ENCODE measurements at regions of chr12 and their contacts with region 1.

Region 1: GRCh38 chr12:56636675-56637540 is 6.8 kb upstream of the BAZ2A start:
- DNase-seq: peak; percentile 95
- ATAC-seq: peak; percentile 64
- H3K4me3 Mint-ChIP-seq: peak overlapping the region; percentile 96
- H3K27ac Mint-ChIP-seq: peak overlapping the region; percentile 97
- H3K4me1 Mint-ChIP-seq: peaks cover 64% of the 10 kb centered on the region
- H3K27me3 Mint-ChIP-seq: no peaks in the 10 kb centered on the region
- CTCF ChIP-seq: no peak

Region 2: GRCh38 chr12:55973598-55974307 is 663.2 kb before region 1 on chr12 and contains the start of gene RAB5B:
- CTCF ChIA-PET with region 1: no interaction called
- POLR2A ChIA-PET with region 1: no interaction called
- intact Hi-C with region 1: loop called (anchors 5 kb)
- DNase-seq: peak; percentile 83
- ATAC-seq: peak; percentile 87
- H3K4me3 Mint-ChIP-seq: no peak within 1 kb of the TSS
- H3K27ac Mint-ChIP-seq: no peak within 1 kb of the TSS
- H3K4me1 Mint-ChIP-seq: peaks cover 27% of the 10 kb centered on the region
- H3K27me3 Mint-ChIP-seq: no peaks in the 10 kb centered on the region
- CTCF ChIP-seq: no peak
- total RNA-seq, gene RAB5B: 82.1 and 83.8 TPM in 2 replicates

Region 3: DNA sequence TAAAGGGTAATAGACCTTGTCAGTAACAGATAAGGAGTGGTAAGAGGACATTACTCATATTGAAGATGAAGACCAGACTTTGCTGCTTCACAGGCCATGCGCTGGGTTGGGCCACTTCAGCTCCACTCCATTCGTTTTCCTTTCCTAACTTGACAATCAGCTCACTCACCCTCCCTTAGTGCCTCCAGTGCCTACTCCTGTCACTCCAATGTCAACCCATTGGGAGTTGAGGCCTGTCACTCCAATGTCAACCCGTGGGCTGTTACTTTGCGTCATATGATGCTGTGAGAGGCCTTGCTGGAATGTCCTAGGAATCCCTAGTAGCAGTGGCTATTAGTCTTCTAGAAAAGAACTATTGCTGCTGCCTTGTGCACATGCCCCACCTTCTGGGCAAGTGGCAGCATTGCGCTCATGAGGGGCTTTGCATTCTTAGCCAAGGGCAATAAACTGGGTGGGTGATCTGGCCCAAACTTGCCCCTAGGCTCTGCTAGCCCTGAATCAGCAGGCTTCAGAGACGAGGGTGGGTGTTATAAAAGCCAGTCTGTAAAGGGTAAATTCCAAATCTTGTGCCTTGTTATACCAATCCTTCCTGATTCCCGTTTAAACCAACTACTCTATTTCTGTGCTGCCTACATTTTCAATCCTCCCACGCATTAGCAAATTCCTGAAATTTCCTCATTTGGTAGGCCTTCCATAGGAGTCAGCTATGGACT is 42.8 kb before region 1 on chr12:
- CTCF ChIA-PET with region 1: interaction called, 25 read pairs
- POLR2A ChIA-PET with region 1: no interaction called
- intact Hi-C with region 1: no loop called
- DNase-seq: peak; percentile 33
- ATAC-seq: peak; percentile 83
- H3K4me3 Mint-ChIP-seq: no peak overlapping the region
- H3K27ac Mint-ChIP-seq: no peak overlapping the region
- H3K4me1 Mint-ChIP-seq: peaks cover 2% of the 10 kb centered on the region
- H3K27me3 Mint-ChIP-seq: no peaks in the 10 kb centered on the region
- CTCF ChIP-seq: no peak

Region 4: GRCh38 chr12:56677680-56678079 is 40.8 kb after region 1 on chr12:
- CTCF ChIA-PET with region 1: interaction called, 5 read pairs
- POLR2A ChIA-PET with region 1: interaction called, 17 read pairs
- intact Hi-C with region 1: no loop called
- DNase-seq: no peak
- ATAC-seq: no peak
- H3K4me3 Mint-ChIP-seq: no peak overlapping the region
- H3K27ac Mint-ChIP-seq: peak overlapping the region; percentile 42
- H3K4me1 Mint-ChIP-seq: peaks cover 53% of the 10 kb centered on the region
- H3K27me3 Mint-ChIP-seq: no peaks in the 10 kb centered on the region
- CTCF ChIP-seq: no peak

Region 5: DNA sequence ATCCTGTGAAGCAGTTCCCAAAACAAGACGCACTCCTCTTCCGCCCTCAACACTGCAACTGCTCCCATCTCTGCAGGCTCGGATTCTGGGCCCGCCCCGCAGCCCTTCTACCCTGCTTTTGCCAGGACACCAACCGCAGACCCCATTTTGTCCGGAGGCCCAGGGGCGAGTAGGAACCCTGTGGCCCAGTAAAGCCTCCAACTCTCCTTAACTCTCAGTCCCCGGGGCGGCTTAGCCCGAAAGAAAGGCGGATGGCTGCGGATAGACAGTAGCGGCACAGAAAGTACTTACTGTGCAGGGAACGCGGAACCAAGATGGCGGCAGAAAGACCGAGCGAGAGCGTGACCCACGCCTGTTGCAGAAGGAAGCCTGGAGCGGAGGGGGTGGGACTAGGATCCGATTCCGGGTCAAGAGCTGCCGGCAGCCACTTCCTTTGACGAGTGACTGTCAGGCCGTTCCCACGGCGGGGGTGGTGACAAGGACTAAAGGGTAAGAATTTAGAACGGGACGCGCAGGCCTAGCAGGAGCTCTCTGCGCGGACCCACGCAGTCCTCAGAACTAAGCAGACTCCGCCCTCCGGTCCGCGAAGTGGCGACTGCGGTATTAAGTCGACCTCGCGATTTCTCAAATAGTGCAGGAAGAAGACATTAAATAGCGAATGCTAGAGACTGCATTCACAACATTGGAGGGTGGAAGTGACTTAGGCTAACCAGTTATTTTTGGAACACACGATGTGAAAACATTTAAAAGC is 88.2 kb after region 1 on chr12 and contains the start of gene NACA:
- CTCF ChIA-PET with region 1: interaction called, 3 read pairs
- POLR2A ChIA-PET with region 1: interaction called, 62 read pairs
- intact Hi-C with region 1: loop called (anchors 1 kb)
- DNase-seq: peak; percentile 90
- ATAC-seq: peak; percentile 95
- H3K4me3 Mint-ChIP-seq: peak within 1 kb of the TSS; percentile 99
- H3K27ac Mint-ChIP-seq: peak within 1 kb of the TSS; percentile 98
- H3K4me1 Mint-ChIP-seq: peaks cover 52% of the 10 kb centered on the region
- H3K27me3 Mint-ChIP-seq: no peaks in the 10 kb centered on the region
- CTCF ChIP-seq: no peak
- total RNA-seq, gene NACA: 1,104 and 1,342 TPM in 2 replicates

Region 6: DNA sequence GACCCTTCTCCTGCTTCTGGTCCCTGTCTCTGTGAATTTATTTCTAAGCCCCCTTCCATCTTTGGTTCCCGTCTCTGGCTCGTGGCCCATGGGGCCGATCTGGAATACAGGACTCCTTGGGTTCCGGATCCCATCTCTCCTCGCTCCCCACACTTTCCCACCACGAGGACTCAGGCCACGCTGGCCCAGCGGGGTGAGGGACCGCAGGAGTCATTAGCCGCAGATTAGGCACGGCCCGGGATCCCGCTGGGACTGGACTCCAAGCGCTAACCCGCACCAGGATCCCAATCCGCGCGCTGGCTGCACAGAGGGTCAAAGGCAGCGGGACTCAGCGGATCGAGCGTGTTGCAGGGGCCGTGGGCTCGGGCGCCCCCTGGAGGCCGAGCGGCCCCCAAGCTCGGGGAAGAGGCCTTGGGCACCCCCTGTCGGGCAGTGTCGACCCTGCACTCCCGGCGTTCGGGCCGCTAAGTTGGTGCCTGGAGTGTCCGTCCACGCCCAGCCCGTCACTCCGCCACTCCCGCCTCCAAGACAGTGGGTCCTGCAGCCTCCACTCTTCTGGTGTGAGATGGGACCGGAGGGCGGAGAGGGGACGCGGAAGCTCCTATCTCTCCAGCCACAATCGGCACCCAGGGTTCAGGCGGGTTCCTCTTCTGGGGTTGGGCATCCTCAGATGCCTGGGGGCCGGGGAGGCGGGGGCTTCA is 602.1 kb after region 1 on chr12:
- CTCF ChIA-PET with region 1: no interaction called
- POLR2A ChIA-PET with region 1: no interaction called
- intact Hi-C with region 1: loop called (anchors 10 kb)
- DNase-seq: peak; percentile 96
- ATAC-seq: peak; percentile 54
- H3K4me3 Mint-ChIP-seq: peak overlapping the region; percentile 89
- H3K27ac Mint-ChIP-seq: peak overlapping the region; percentile 90
- H3K4me1 Mint-ChIP-seq: peaks cover 94% of the 10 kb centered on the region
- H3K27me3 Mint-ChIP-seq: peaks cover 8% of the 10 kb centered on the region
- CTCF ChIP-seq: peak; percentile 99